ENCODE measurements at regions of chr13 and their contacts with region 1.

Region 1: GRCh38 chr13:20182231-20182846 is 10.4 kb downstream of the GJB2 start:
- DNase-seq: peak; percentile 48 to 90
- H3K4me3 ChIP-seq: no peak overlapping the region
- H3K27ac ChIP-seq: no peak overlapping the region
- H3K4me1 ChIP-seq: peaks cover 0 to 4% (median 2%) of the 10 kb centered on the region in 4 donors
- H3K27me3 ChIP-seq: peaks cover 0 to 52% (median 6%) of the 10 kb centered on the region in 3 donors
- CTCF ChIP-seq: peak in 5 of 7 experiments; percentile 64 to 76 (median 74)
- EP300 ChIP-seq: no peak
- POLR2A ChIP-seq: no peak

Region 2: DNA sequence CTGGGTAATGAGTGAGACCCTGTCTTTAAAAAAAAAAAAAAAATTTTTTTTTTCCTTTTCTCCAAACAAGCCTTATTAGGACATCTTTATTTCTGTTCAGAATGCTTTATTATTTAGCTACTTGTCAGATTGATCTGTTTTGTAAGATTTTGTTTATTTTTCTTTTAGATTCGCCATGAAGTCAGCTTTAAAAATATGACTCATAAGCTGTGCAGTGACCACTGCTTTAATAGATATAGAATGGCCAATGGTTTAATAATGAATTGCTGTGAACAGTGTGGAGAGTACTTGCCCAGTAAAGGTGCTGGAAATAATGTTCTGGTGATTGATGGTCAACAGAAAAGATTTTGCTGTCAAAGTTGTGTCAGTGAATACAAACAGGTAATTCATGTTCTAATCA is 176.1 kb before region 1 on chr13:
- intact Hi-C with region 1: no loop called
- DNase-seq: no peak
- H3K4me3 ChIP-seq: no peak overlapping the region
- H3K27ac ChIP-seq: no peak overlapping the region
- H3K4me1 ChIP-seq: peaks cover 9 to 26% (median 19%) of the 10 kb centered on the region in 4 donors
- H3K27me3 ChIP-seq: no peaks in the 10 kb centered on the region
- CTCF ChIP-seq: no peak
- EP300 ChIP-seq: no peak
- POLR2A ChIP-seq: no peak

Region 3: DNA sequence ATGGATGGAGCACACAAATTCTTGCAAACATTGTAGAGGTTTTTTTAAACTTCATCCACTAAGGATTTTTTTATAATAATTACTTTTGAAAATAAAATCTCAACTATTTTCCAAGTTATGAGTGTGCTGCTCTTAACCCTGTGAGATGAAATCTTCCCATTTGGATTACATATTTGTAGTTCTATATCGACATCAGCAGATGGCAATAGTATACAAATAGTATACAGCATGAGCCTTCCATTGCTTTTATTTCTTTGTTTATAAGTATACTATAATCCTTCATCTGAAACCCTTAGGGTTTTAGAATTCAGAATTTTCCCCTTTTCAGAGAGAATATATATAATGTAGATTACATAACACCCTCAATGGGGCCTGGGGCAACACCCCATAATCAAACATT is 92.0 kb before region 1 on chr13:
- intact Hi-C with region 1: no loop called
- DNase-seq: no peak
- H3K4me3 ChIP-seq: no peak overlapping the region
- H3K27ac ChIP-seq: no peak overlapping the region
- H3K4me1 ChIP-seq: no peaks in the 10 kb centered on the region
- H3K27me3 ChIP-seq: no peaks in the 10 kb centered on the region
- CTCF ChIP-seq: no peak
- EP300 ChIP-seq: no peak
- POLR2A ChIP-seq: no peak

Region 4: GRCh38 chr13:20247403-20247802 is 65.1 kb after region 1 on chr13:
- intact Hi-C with region 1: no loop called
- DNase-seq: peak in 1 of 2 donors; percentile 54
- H3K4me3 ChIP-seq: no peak overlapping the region
- H3K27ac ChIP-seq: no peak overlapping the region
- H3K4me1 ChIP-seq: no peaks in the 10 kb centered on the region
- H3K27me3 ChIP-seq: peaks cover 0 to 1% (median 0%) of the 10 kb centered on the region in 3 donors
- CTCF ChIP-seq: no peak
- EP300 ChIP-seq: no peak
- POLR2A ChIP-seq: no peak

Region 5: DNA sequence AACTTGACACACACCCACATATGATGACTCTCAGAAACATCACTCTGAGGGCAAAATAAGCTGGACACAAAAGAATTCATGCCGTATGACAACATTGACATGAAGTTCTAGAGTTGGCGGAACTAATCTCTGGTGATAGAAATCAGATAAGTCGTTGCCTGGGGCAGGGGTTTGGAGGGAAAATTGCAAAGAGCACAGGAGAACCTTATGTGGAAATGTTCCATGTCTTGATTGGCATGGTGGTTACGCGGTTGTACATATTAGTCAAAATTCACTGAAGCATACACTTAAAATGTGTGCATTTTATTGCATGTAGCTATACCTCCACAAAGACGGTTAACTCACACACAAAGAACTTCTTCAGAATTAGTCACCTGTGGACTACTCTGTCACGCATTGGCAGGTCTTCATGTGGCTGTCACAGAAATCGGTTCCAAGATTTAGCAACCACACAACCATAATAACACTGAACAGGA is 187.6 kb after region 1 on chr13:
- intact Hi-C with region 1: no loop called
- DNase-seq: no peak
- H3K4me3 ChIP-seq: no peak overlapping the region
- H3K27ac ChIP-seq: no peak overlapping the region
- H3K4me1 ChIP-seq: no peaks in the 10 kb centered on the region
- H3K27me3 ChIP-seq: no peaks in the 10 kb centered on the region
- CTCF ChIP-seq: no peak
- EP300 ChIP-seq: no peak
- POLR2A ChIP-seq: no peak

Region 6: GRCh38 chr13:20489185-20489820 is 307.0 kb after region 1 on chr13:
- intact Hi-C with region 1: loop called (anchors 10 kb)
- DNase-seq: peak in 1 of 2 donors; percentile 49
- H3K4me3 ChIP-seq: no peak overlapping the region
- H3K27ac ChIP-seq: no peak overlapping the region
- H3K4me1 ChIP-seq: peaks cover 0 to 10% (median 0%) of the 10 kb centered on the region in 4 donors
- H3K27me3 ChIP-seq: no peaks in the 10 kb centered on the region
- CTCF ChIP-seq: peak in 2 of 7 experiments; percentile 14 to 41
- EP300 ChIP-seq: no peak
- POLR2A ChIP-seq: no peak